ENCODE measurements at regions of chr16 and their contacts with region 1.

Region 1: DNA sequence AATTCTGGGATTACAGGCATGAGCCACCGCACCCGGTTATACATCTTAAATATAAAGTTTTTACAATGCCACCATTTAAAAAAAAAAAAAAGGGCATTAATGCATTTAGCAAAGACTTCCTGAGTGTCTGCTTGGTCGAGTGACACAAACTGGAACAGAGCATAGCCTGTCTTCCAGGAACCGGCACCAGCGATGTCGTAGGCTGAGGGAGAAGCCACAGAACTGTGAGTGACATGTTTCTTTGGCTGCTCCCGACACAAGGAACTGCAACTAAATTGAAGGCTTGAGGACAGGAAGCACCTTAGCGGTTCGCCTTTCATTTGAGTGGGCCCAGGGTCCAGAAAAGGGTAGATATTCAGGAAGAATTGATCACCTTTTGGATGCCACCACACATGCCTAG is 717.8 kb downstream of the MAF start:
- DNase-seq: no peak
- H3K4me3 ChIP-seq: no peak overlapping the region
- H3K27ac ChIP-seq: no peak overlapping the region
- H3K4me1 ChIP-seq: no peaks in the 10 kb centered on the region
- H3K27me3 ChIP-seq: no peaks in the 10 kb centered on the region
- CTCF ChIP-seq: no peak
- EP300 ChIP-seq: no peak
- POLR2A ChIP-seq: no peak

Region 2: DNA sequence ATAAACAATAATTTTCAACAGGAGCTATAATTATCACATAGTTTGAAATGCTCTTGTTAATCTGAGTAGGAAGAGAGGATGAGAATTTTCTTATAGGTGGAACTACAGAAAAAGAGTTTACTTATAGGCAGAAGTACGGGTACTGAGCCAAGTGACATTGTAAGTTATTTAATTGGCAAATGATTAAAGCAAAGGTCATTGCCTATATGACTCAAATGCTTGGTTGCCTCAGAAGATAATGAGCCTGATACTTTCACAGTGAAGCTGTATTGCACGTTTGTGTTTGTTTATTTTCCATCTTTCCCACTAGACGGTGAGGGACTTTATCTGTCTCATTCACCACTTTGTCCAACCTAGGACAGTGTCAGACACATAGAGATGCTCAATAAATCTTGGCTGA is 31.5 kb before region 1 on chr16:
- in situ Hi-C with region 1: no loop called
- intact Hi-C with region 1: loop called (anchors 1 kb)
- DNase-seq: no peak
- H3K4me3 ChIP-seq: no peak overlapping the region
- H3K27ac ChIP-seq: no peak overlapping the region
- H3K4me1 ChIP-seq: no peaks in the 10 kb centered on the region
- H3K27me3 ChIP-seq: no peaks in the 10 kb centered on the region
- CTCF ChIP-seq: no peak
- EP300 ChIP-seq: no peak
- POLR2A ChIP-seq: no peak

Measured in transverse colon (tissue), 4 donors.